Activated CD4-positive, alpha-beta T cell treated with anti-CD3 and anti-CD28 coated beads for 36 hours (primary cell): ENCODE measurements at regions of chr1 and their contacts with region 1.

Region 1: DNA sequence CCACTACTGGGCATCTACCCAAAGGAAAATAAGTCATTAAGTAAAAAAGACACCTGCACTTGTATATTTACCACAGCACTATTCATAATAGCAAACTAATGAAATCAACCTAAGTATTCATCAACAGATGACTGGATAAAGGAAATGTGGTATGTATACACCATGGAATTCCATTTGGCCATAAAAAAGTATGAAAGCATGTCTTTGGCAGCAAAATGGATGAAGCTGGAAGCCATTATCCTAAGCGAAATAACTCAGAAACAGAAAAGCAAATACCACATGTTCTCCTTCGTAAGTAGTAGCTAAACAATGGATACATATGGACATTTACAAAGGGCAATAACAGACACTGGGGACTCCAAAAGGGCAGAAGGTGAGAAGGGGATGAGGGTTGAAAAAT is 485.7 kb upstream of the BRINP3 start:
- DNase-seq: no peak
- ATAC-seq: no peak
- H3K4me3 Mint-ChIP-seq: no peak overlapping the region
- H3K27ac Mint-ChIP-seq: no peak overlapping the region
- H3K4me1 Mint-ChIP-seq: no peaks in the 10 kb centered on the region
- H3K27me3 Mint-ChIP-seq: no peaks in the 10 kb centered on the region

Region 2: GRCh38 chr1:190478149-190479049 is 484.9 kb before region 1 on chr1:
- CTCF ChIA-PET with region 1: no interaction called
- POLR2A ChIA-PET with region 1: no interaction called
- intact Hi-C with region 1: loop called in 1 of 2 experiments (anchors 5 kb)
- DNase-seq: no peak
- ATAC-seq: no peak
- H3K4me3 Mint-ChIP-seq: no peak overlapping the region
- H3K27ac Mint-ChIP-seq: no peak overlapping the region
- H3K4me1 Mint-ChIP-seq: peaks cover 10% of the 10 kb centered on the region
- H3K27me3 Mint-ChIP-seq: peaks cover 35% of the 10 kb centered on the region